GM10248 (cell line): ENCODE measurements at regions of chr2 and their contacts with region 1.

Region 1: DNA sequence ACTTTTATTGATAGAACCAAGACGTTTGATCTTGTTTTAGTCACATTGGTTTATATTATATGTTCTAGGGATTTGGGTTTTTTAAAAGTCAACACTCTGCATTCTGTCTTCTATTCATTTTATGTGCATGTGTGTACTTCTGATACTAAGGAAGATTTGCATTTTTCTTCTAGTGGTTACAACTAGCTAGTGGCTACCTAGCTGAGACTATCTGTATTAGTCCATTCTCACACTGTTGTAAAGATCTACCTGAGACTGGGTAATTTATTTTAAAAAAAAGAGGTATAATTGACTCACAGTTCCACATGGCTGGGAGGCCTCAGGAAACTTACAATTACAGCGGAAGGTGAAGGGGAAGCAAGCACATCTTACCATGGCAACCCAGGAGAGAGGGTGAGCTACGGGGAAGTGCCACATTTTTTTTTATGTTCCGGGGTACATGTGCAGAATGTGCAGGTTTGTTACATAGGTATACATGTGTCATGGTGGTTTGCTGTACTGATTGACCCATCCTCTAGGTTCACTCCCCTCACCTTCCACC is 69.9 kb downstream of the SP100 start:
- DNase-seq: no peak
- CTCF ChIP-seq: no peak

Region 2: DNA sequence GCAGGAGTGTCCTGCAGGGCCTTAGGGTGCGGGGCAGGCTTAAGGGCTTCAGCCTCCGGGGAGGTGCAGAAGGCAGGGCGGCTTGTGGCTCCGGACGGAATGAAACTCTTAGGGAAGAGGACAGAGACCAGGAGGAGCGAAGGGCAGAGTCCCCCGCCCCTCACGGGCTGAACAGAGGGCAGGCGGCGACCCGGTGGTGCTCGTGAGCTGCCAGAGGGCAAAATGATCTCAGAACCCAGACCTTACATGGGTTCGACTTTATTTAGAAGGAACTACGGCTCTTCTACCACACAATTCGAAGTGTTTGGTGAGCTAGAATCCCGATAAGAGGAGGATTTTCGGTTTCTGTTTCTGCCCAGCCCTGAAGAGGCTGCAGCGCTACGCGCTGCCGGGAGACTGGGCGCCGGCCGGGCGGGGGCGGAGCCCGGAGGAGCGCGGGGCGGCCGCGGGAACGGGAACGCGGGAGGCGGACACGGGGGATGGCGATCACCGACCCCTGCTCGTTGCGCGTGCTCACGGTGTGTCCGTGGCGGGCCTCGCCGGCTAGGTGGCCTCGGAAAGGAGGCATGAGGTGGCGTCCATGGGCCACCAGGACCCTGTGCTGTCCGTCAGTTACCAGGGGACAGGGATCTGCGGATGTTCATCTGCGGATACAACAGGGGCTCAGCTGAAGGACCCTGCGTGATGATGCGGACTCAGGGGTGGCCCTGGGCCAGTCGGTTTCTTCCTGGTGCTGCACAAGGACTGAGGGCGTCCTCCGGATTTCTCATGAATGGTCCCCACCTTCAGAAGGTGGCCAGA is 74.1 kb before region 1 on chr2:
- CTCF ChIA-PET with region 1: no interaction called
- POLR2A ChIA-PET with region 1: no interaction called
- DNase-seq: peak; percentile 83
- CTCF ChIP-seq: no peak

Region 3: DNA sequence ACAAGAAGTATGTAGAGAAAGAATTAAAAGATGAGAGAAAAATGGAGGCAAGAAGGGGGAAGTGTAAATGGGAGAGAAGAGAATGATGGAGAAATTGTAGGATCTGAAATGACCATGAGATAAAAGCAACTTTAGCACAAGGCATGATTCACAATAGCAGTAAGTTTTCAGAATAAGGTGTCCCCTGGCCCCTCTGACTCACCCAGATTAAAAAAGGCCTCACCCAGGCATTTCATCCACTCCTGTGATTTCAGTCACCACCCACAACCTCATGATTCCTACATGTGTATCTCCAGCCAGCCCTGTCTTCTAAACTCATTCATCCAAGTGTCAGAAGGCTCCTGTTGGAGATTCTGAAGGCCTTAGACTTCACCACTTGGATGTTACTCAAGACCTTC is 13.3 kb before region 1 on chr2:
- CTCF ChIA-PET with region 1: interaction called, 17 read pairs
- POLR2A ChIA-PET with region 1: no interaction called
- DNase-seq: no peak
- CTCF ChIP-seq: no peak